Naive thymus-derived CD4-positive, alpha-beta T cell (primary cell): ENCODE measurements at regions of chr18 and their contacts with region 1.

Region 1: GRCh38 chr18:13137670-13138419 is 80.7 kb upstream of the LDLRAD4 start:
- DNase-seq: peak; percentile 26 to 86 (median 77)
- ATAC-seq: peak; percentile 94
- H3K4me3 ChIP-seq: peak overlapping the region; percentile 83
- H3K4me3 Mint-ChIP-seq: peak overlapping the region; percentile 92 to 100 (median 99)
- H3K27ac ChIP-seq: peak overlapping the region; percentile 75
- H3K27ac Mint-ChIP-seq: peak overlapping the region; percentile 93 to 98 (median 97)
- H3K4me1 ChIP-seq: peaks cover 0 to 7% of the 10 kb centered on the region in 2 donors
- H3K4me1 Mint-ChIP-seq: peaks cover 12 to 32% (median 28%) of the 10 kb centered on the region in 7 donors
- H3K27me3 ChIP-seq: no peaks in the 10 kb centered on the region
- H3K27me3 Mint-ChIP-seq: peaks cover 0 to 22% (median 0%) of the 10 kb centered on the region in 5 donors

Region 2: GRCh38 chr18:11851146-11851805 is 1286.6 kb before region 1 on chr18 and contains the start of gene CHMP1B:
- CTCF ChIA-PET with region 1: no interaction called
- POLR2A ChIA-PET with region 1: interaction called, 6 read pairs
- intact Hi-C with region 1: loop called in 1 of 2 experiments (anchors 2 kb)
- DNase-seq: peak; percentile 95 to 97 (median 97)
- ATAC-seq: peak; percentile 91
- H3K4me3 ChIP-seq: peak within 1 kb of the TSS; percentile 88
- H3K4me3 Mint-ChIP-seq: peak within 1 kb of the TSS; percentile 89 to 100 (median 100)
- H3K27ac ChIP-seq: peak within 1 kb of the TSS; percentile 96
- H3K27ac Mint-ChIP-seq: peak within 1 kb of the TSS; percentile 97 to 100 (median 100)
- H3K4me1 ChIP-seq: peaks cover 19 to 21% of the 10 kb centered on the region in 2 donors
- H3K4me1 Mint-ChIP-seq: peaks cover 16 to 62% (median 50%) of the 10 kb centered on the region in 7 donors
- H3K27me3 ChIP-seq: no peaks in the 10 kb centered on the region
- H3K27me3 Mint-ChIP-seq: peaks cover 0 to 13% (median 0%) of the 10 kb centered on the region in 5 donors
- total RNA-seq, gene CHMP1B: 27.2 to 115 (median 56.1) TPM

Region 3: GRCh38 chr18:12702221-12703095 is 435.4 kb before region 1 on chr18 and contains the starts of genes CEP76 and PSMG2:
- CTCF ChIA-PET with region 1: no interaction called
- POLR2A ChIA-PET with region 1: interaction called, 3 read pairs
- intact Hi-C with region 1: loop called (anchors 2 kb)
- DNase-seq: peak; percentile 77 to 88 (median 84)
- ATAC-seq: peak; percentile 89
- H3K4me3 ChIP-seq: peak within 1 kb of the TSS; percentile 97
- H3K4me3 Mint-ChIP-seq: peak within 1 kb of the TSS; percentile 92 to 99 (median 98)
- H3K27ac ChIP-seq: peak within 1 kb of the TSS; percentile 96
- H3K27ac Mint-ChIP-seq: peak within 1 kb of the TSS; percentile 91 to 100 (median 96)
- H3K4me1 ChIP-seq: peaks cover 17 to 20% of the 10 kb centered on the region in 2 donors
- H3K4me1 Mint-ChIP-seq: peaks cover 36 to 63% (median 50%) of the 10 kb centered on the region in 7 donors
- H3K27me3 ChIP-seq: no peaks in the 10 kb centered on the region
- H3K27me3 Mint-ChIP-seq: no peaks in the 10 kb centered on the region
- total RNA-seq, gene CEP76: 6.9 to 13.2 (median 11.1) TPM
- total RNA-seq, gene PSMG2: 49.9 to 104 (median 59.9) TPM

Region 4: GRCh38 chr18:13112982-13113381 is 24.9 kb before region 1 on chr18:
- CTCF ChIA-PET with region 1: no interaction called
- POLR2A ChIA-PET with region 1: no interaction called
- intact Hi-C with region 1: loop called in 1 of 2 experiments (anchors 2 kb)
- DNase-seq: no peak
- ATAC-seq: no peak
- H3K4me3 ChIP-seq: no peak overlapping the region
- H3K4me3 Mint-ChIP-seq: no peak overlapping the region
- H3K27ac ChIP-seq: no peak overlapping the region
- H3K27ac Mint-ChIP-seq: no peak overlapping the region
- H3K4me1 ChIP-seq: no peaks in the 10 kb centered on the region
- H3K4me1 Mint-ChIP-seq: no peaks in the 10 kb centered on the region
- H3K27me3 ChIP-seq: no peaks in the 10 kb centered on the region
- H3K27me3 Mint-ChIP-seq: no peaks in the 10 kb centered on the region

Region 5: DNA sequence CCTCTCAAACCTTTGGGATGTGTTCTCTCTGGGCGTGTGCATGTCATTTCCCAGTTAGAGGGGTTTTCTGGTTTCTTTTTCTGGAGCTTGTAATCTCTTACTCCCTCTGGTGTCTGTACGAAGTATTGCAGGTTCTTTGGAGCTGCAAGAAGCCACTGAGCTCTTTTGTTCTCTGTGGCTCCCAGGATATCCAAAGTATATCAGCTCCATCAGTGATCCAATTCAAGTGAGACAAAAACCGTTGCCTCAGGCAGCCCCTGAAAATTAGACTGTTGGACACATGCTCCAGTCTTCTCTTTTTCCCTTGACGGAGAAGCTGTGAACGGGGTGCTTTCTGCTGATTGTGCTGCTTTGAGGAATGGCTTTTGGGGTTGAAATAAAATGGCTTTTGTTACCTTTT is 21.7 kb after region 1 on chr18:
- CTCF ChIA-PET with region 1: interaction called, 4 read pairs
- POLR2A ChIA-PET with region 1: interaction called, 8 read pairs
- intact Hi-C with region 1: loop called (anchors 1 to 2 kb)
- DNase-seq: peak in 7 of 9 donors; percentile 32 to 66 (median 56)
- ATAC-seq: peak; percentile 79
- H3K4me3 ChIP-seq: no peak overlapping the region
- H3K4me3 Mint-ChIP-seq: peak overlapping the region in 4 of 10 donors; percentile 1 to 52 (median 8)
- H3K27ac ChIP-seq: no peak overlapping the region
- H3K27ac Mint-ChIP-seq: peak overlapping the region in 1 of 9 donors; percentile 43
- H3K4me1 ChIP-seq: no peaks in the 10 kb centered on the region
- H3K4me1 Mint-ChIP-seq: peaks cover 0 to 5% (median 3%) of the 10 kb centered on the region in 7 donors
- H3K27me3 ChIP-seq: no peaks in the 10 kb centered on the region
- H3K27me3 Mint-ChIP-seq: peaks cover 0 to 18% (median 4%) of the 10 kb centered on the region in 5 donors

Region 6: DNA sequence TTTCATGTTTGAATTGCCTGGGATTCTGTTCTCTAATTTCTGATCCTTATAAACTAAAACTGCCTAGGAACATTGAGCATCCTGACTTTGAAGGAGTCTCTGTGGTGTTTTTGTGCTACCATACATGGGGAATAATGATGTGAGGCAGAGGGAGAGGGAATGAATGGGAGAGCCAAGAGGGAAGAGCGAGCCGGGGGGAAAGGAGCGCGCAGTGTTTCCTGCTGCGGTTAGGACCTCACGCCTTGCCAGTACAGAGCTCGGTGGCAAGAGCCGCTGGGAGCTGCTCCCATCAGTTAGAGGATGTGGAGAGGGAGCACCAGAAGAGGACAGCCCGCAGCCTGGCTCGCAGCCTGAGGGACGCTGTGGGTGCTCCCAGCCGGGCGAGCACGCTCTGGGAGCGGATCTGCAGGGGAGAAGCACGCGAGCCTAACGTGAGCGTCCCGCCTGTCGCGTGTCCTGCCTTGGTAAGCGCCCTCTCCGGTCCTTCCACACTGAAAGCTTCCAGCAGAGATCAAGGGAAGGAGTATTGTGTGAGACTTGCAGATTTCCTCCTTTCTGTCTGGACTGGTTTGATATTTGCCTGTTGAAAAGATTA is 473.9 kb after region 1 on chr18:
- CTCF ChIA-PET with region 1: no interaction called
- POLR2A ChIA-PET with region 1: no interaction called
- intact Hi-C with region 1: loop called in 1 of 2 experiments (anchors 5 kb)
- DNase-seq: peak in 3 of 9 donors; percentile 8 to 17 (median 11)
- ATAC-seq: peak; percentile 2
- H3K4me3 ChIP-seq: peak overlapping the region; percentile 36
- H3K4me3 Mint-ChIP-seq: peak overlapping the region; percentile 82 to 97 (median 90)
- H3K27ac ChIP-seq: peak overlapping the region; percentile 61
- H3K27ac Mint-ChIP-seq: peak overlapping the region; percentile 77 to 96 (median 86)
- H3K4me1 ChIP-seq: peaks cover 34 to 49% of the 10 kb centered on the region in 2 donors
- H3K4me1 Mint-ChIP-seq: peaks cover 55 to 82% (median 73%) of the 10 kb centered on the region in 7 donors
- H3K27me3 ChIP-seq: no peaks in the 10 kb centered on the region
- H3K27me3 Mint-ChIP-seq: no peaks in the 10 kb centered on the region